ENCODE measurements at regions of chr12 and their contacts with region 1.

Region 1: DNA sequence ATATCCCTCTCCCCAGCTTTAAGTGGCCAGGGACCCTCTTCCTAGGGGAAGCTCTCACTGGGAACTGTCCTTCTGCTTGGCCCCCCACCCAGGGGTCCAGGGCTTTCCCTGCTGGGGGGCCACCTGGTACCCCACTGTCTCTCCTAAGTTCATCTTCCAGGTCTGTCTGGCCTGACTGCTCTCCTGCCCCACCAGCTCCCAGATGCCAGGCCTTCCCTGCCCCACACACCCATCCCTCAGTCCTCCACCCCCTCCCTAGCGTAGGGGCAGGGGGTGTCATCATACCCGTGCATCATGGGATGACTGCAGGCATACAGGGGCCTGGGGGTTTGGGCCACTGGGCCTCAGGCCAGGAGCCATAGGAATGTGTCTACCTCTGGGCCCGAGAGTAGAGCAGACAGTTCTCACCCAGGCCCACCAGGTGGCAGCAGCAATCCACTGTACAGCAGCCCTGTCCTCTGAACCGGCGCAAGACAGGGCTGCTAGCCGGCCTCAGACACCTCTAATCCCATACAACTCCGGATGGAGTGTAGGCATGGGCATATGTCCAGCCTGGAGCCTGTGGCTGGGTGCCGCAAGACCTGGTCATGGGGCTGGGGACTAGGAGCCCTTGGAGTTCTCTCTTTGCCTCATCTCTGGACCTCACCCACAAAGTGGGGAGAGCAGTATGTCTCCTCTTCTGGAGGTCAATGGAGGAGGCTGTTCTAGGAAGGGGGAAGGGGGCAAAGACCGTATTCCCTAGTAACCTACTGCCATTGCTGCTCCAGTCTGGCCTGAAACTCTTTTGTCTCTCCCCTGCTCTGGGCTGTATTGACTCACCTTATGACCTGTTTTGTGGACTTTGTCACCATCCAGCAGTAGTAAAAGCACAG is 10.0 kb upstream of the SMARCD1 start:
- DNase-seq: peak; percentile 79 to 86
- ATAC-seq: peak; percentile 88 to 95
- H3K4me3 ChIP-seq: no peak overlapping the region
- H3K27ac ChIP-seq: peak overlapping the region in 1 of 2 experiments; percentile 59; a peak in 3 of 6 replicates
- H3K4me1 ChIP-seq: peaks cover 16% of the 10 kb centered on the region
- CTCF ChIP-seq: peak; percentile 94
- EP300 ChIP-seq: no peak
- POLR2A ChIP-seq: no peak
- RAD21 ChIP-seq: peak; percentile 98

Region 2: DNA sequence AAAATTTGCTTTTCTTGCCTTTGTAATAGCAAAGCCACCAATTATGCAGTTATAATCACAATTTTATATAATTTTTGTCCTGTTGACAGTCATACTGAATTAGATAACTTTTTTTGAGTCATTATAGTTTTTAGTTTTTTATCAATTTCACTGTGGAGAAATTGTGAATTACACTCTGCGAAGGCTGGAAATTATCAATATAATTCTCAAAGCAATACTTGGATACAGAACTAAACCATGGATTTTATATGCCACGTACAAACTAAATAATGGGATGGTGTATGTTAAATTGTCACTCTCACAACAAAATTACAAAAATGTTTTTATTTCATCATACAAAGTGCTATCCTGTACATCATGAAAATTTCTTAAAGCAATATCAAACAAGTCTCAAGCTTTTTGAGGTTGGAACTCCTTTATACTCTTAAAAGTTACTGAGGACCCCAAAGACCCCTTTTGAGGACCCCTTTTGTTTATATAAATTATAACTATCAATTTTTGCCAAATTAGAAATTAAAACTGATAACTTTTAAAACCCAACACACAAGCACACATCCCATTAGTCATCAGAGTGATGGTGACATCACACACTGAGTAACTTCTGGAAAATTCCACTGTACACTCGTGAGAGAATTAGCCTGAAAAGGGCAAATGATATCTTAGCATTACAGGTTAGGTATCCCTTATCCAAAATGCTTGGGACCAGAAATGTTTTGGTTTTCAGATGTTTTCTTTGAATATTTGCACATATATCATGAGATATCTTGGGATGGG is 144.5 kb before region 1 on chr12:
- CTCF ChIA-PET with region 1: interaction called, 10 read pairs
- POLR2A ChIA-PET with region 1: no interaction called
- DNase-seq: no peak
- ATAC-seq: peak; percentile 40 to 54; a peak in 1 of 6 replicates
- H3K4me3 ChIP-seq: no peak overlapping the region
- H3K27ac ChIP-seq: no peak overlapping the region
- H3K4me1 ChIP-seq: peaks cover 7% of the 10 kb centered on the region; the same call in 2 of the 3 replicates
- CTCF ChIP-seq: no peak
- EP300 ChIP-seq: no peak
- POLR2A ChIP-seq: no peak
- RAD21 ChIP-seq: no peak

Region 3: GRCh38 chr12:50006789-50007436 is 68.3 kb before region 1 on chr12:
- CTCF ChIA-PET with region 1: interaction called, 12 read pairs
- POLR2A ChIA-PET with region 1: no interaction called
- DNase-seq: no peak
- ATAC-seq: no peak
- H3K4me3 ChIP-seq: no peak overlapping the region
- H3K27ac ChIP-seq: no peak overlapping the region
- H3K4me1 ChIP-seq: no peaks in the 10 kb centered on the region
- CTCF ChIP-seq: no peak
- EP300 ChIP-seq: no peak
- POLR2A ChIP-seq: no peak
- RAD21 ChIP-seq: no peak

Region 4: GRCh38 chr12:50050410-50051098 is 24.6 kb before region 1 on chr12:
- CTCF ChIA-PET with region 1: interaction called, 28 read pairs
- POLR2A ChIA-PET with region 1: no interaction called
- DNase-seq: no peak
- ATAC-seq: no peak
- H3K4me3 ChIP-seq: no peak overlapping the region
- H3K27ac ChIP-seq: no peak overlapping the region
- H3K4me1 ChIP-seq: 0 out of 3 replicates have a peak, but pooled peaks cover under 1% of the 10 kb centered on the region
- CTCF ChIP-seq: no peak
- EP300 ChIP-seq: no peak
- POLR2A ChIP-seq: no peak
- RAD21 ChIP-seq: no peak

Region 5: GRCh38 chr12:50167041-50167828 is 92.1 kb after region 1 on chr12 and contains the start of gene CERS5:
- CTCF ChIA-PET with region 1: interaction called, 205 read pairs
- POLR2A ChIA-PET with region 1: no interaction called
- DNase-seq: peak; percentile 94 to 99
- ATAC-seq: peak; percentile 98 to 99
- H3K4me3 ChIP-seq: peak within 1 kb of the TSS; percentile 83
- H3K27ac ChIP-seq: peak within 1 kb of the TSS; percentile 84 to 96
- H3K4me1 ChIP-seq: peaks cover 10% of the 10 kb centered on the region; the same call in 2 of the 3 replicates
- CTCF ChIP-seq: no peak
- EP300 ChIP-seq: no peak
- POLR2A ChIP-seq: peak; percentile 74
- RAD21 ChIP-seq: no peak
- polyA plus RNA-seq, gene CERS5: 56.3 and 56.6 TPM in 2 replicates

Region 6: GRCh38 chr12:50555471-50555885 is 480.3 kb after region 1 on chr12:
- CTCF ChIA-PET with region 1: no interaction called
- POLR2A ChIA-PET with region 1: no interaction called
- DNase-seq: no peak
- ATAC-seq: no peak
- H3K4me3 ChIP-seq: no peak overlapping the region
- H3K27ac ChIP-seq: peak overlapping the region in 1 of 2 experiments; percentile 71; a peak in 3 of 6 replicates
- H3K4me1 ChIP-seq: peaks cover 20% of the 10 kb centered on the region
- CTCF ChIP-seq: no peak
- EP300 ChIP-seq: no peak
- POLR2A ChIP-seq: no peak
- RAD21 ChIP-seq: no peak

Measured in A549 (cell line).